ENCODE measurements at regions of chr1 and their contacts with region 1.

Region 1: GRCh38 chr1:18597160-18598042 is 33.2 kb upstream of the PAX7 start:
- DNase-seq: peak; percentile 38 to 88 (median 74)

Region 2: DNA sequence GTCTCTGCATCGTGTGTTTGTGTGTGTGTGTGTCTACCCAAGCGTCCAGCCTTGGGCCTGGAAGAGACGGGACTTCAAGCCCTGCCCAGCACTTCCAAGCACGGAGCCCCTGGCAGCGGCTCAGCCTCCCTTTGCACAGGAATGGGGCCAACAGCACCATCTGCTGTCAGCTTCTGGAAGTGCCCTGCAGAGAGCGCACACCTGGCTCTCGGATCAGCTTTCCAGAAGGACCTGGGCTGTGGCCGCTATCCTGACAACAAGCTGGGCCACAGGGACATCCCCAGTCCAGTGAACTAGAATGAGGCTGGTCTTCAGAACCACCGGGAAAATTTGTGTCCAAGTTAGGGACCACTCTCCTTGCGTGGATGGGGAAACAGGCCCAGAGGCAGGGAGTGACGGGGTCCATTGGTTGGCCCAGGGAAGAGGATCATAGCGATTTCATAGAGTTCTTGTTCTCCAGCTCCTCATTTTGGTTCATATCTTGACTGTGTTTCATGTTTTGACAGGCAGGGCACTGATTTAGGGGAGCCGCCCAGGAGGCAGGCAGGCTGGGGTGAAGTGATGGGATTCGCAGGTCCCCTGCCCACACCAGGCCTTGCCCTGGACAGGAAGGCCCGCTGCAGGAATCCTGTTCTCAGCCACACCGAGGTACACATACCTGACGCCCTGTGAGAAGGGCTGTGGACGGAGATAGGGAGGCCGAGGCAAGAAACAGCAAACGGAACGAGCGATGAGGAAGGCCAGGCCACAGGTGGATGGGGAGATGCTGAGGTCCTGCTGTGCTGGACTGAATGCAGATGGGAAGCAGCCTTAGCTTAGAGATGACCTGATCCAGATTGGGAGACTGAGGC is 223.6 kb after region 1 on chr1:
- intact Hi-C with region 1: loop called (anchors 5 kb)
- DNase-seq: peak; percentile 23 to 88 (median 76)

Region 3: GRCh38 chr1:18875107-18875795 is 277.9 kb after region 1 on chr1:
- intact Hi-C with region 1: loop called (anchors 5 kb)
- DNase-seq: peak; percentile 69 to 93 (median 85)

Measured in head of caudate nucleus (tissue), 42 donors.